ENCODE measurements at regions of chr4 and their contacts with region 1.

Region 1: DNA sequence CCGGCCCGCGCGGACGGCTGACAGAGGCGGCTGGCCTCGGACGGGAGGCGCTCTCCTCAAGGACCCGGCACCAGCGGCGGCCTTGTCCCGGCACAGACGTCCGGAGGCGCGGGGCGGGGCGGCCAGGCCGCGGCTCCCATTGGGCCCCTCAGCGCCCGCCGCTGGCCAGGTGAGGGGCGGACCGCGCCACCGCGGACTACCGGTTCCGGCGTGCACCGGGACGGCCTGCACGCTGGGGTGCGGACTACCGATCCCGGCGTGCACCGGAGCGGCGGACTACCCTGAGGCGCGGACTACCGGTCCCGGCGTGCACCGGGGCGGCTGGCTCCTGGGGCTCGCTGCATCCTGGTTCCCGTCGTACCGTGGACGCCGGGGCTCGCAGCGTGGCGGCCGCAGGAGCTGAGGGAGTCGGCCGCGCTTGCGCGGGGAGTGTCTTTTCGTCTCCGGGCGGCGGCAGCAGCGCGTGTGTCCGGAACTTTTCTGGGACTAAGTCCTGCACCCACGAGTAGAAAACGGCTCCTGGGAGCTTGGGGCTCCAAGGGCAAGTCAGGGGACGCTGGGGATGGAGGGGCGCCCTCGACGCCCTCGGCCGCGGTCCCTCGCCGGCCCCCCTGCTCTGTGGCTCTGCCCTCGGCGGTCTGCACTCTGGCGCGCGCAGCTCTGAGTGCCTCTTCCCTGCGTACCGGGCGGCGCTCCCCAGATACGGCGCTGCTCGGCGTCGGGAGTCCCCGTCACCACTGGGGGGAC is at the start of gene LETM1:
- DNase-seq: peak; percentile 93 to 95
- ATAC-seq: peak; percentile 82 to 89
- H3K4me3 ChIP-seq: peak within 1 kb of the TSS; percentile 63 to 98 (median 78)
- H3K27ac ChIP-seq: peak within 1 kb of the TSS; percentile 72 to 94 (median 83)
- H3K4me1 ChIP-seq: peaks cover 32 to 43% of the 10 kb centered on the region in 2 donors
- H3K27me3 ChIP-seq: no peaks in the 10 kb centered on the region
- CTCF ChIP-seq: peak in 3 of 5 experiments; percentile 4 to 32 (median 10)
- POLR2A ChIP-seq: peak; percentile 70 to 78
- total RNA-seq, gene LETM1: 23.2 to 40.3 (median 33.6) TPM

Region 2: GRCh38 chr4:1249148-1249730 is 607.0 kb before region 1 on chr4:
- in situ Hi-C with region 1: no loop called
- intact Hi-C with region 1: loop called (anchors 5 kb)
- DNase-seq: peak; percentile 74 to 78
- ATAC-seq: peak; percentile 78 to 80
- H3K4me3 ChIP-seq: peak overlapping the region; percentile 68 to 85 (median 83)
- H3K27ac ChIP-seq: peak overlapping the region; percentile 94 to 97 (median 96)
- H3K4me1 ChIP-seq: peaks cover 45 to 73% of the 10 kb centered on the region in 2 donors
- H3K27me3 ChIP-seq: no peaks in the 10 kb centered on the region
- CTCF ChIP-seq: no peak
- POLR2A ChIP-seq: peak; percentile 23 to 62

Region 3: GRCh38 chr4:1683736-1684505 is 172.3 kb before region 1 on chr4 and contains the start of gene FAM53A:
- in situ Hi-C with region 1: loop called in 1 of 4 experiments (anchors 5 kb)
- intact Hi-C with region 1: no loop called
- DNase-seq: peak in 1 of 2 donors; percentile 79
- ATAC-seq: peak; percentile 85 to 86
- H3K4me3 ChIP-seq: peak within 1 kb of the TSS; percentile 62 to 85 (median 71)
- H3K27ac ChIP-seq: peak within 1 kb of the TSS; percentile 68 to 86 (median 80)
- H3K4me1 ChIP-seq: peaks cover 0 to 11% of the 10 kb centered on the region in 2 donors
- H3K27me3 ChIP-seq: no peaks in the 10 kb centered on the region
- CTCF ChIP-seq: peak in 4 of 5 experiments; percentile 17 to 39 (median 26)
- POLR2A ChIP-seq: peak; percentile 64 to 68
- total RNA-seq, gene FAM53A: 1.8 to 5.2 (median 2.8) TPM

Region 4: DNA sequence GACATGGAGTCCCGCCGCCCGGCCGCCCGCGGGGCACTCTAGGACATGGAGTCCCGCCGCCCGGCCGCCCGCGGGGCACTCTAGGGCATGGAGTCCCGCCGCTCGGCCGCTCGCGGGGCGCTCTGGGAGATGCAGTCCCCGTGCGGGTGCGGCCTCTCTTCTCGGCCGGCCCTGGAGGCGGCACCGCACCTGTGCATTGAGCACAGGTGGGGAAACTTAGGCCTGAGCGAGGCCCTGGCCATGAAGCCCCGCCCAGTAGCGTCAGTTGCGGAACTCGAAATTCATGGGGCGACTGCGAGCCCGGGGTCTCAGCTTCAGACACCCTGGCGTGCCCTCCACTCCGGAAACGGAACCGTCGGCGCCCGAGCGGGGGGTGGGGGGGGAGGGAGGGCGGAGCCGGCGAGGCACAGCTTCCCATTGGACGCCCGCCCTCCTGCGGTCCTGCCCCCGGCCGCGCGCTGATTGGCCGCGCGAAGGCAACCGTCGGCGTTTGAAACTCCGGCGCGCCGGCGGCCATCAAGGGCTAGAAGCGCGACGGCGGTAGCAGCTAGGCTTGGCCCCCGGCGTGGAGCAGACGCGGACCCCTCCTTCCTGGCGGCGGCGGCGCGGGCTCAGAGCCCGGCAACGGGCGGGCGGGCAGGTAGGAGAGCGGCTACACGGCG is 135.1 kb before region 1 on chr4 and contains the starts of genes TACC3 and TMEM129:
- in situ Hi-C with region 1: no loop called
- intact Hi-C with region 1: loop called (anchors 1 kb)
- DNase-seq: peak; percentile 93 to 96
- ATAC-seq: peak; percentile 94 to 96
- H3K4me3 ChIP-seq: peak within 1 kb of the TSS; percentile 79 to 95 (median 83)
- H3K27ac ChIP-seq: peak within 1 kb of the TSS; percentile 94 to 98 (median 97)
- H3K4me1 ChIP-seq: peaks cover 24 to 27% of the 10 kb centered on the region in 2 donors
- H3K27me3 ChIP-seq: no peaks in the 10 kb centered on the region
- CTCF ChIP-seq: no peak
- POLR2A ChIP-seq: peak; percentile 74 to 80
- total RNA-seq, gene TACC3: 1.5 to 3.2 (median 1.9) TPM
- total RNA-seq, gene TMEM129: 30.3 to 78.0 (median 44.2) TPM

Region 5: GRCh38 chr4:1870578-1871443 is 14.6 kb after region 1 on chr4 and contains the start of gene NSD2:
- in situ Hi-C with region 1: no loop called
- intact Hi-C with region 1: loop called (anchors 1 kb)
- DNase-seq: peak; percentile 78 to 79
- ATAC-seq: peak; percentile 84
- H3K4me3 ChIP-seq: peak within 1 kb of the TSS; percentile 68 to 91 (median 84)
- H3K27ac ChIP-seq: peak within 1 kb of the TSS; percentile 87 to 96 (median 91)
- H3K4me1 ChIP-seq: peaks cover 16 to 23% of the 10 kb centered on the region in 2 donors
- H3K27me3 ChIP-seq: peaks cover 2 to 9% (median 6%) of the 10 kb centered on the region in 3 donors
- CTCF ChIP-seq: peak in 1 of 5 experiments; percentile 12
- POLR2A ChIP-seq: peak; percentile 69 to 73
- total RNA-seq, gene NSD2: 14.8 to 21.3 (median 16.8) TPM

Region 6: DNA sequence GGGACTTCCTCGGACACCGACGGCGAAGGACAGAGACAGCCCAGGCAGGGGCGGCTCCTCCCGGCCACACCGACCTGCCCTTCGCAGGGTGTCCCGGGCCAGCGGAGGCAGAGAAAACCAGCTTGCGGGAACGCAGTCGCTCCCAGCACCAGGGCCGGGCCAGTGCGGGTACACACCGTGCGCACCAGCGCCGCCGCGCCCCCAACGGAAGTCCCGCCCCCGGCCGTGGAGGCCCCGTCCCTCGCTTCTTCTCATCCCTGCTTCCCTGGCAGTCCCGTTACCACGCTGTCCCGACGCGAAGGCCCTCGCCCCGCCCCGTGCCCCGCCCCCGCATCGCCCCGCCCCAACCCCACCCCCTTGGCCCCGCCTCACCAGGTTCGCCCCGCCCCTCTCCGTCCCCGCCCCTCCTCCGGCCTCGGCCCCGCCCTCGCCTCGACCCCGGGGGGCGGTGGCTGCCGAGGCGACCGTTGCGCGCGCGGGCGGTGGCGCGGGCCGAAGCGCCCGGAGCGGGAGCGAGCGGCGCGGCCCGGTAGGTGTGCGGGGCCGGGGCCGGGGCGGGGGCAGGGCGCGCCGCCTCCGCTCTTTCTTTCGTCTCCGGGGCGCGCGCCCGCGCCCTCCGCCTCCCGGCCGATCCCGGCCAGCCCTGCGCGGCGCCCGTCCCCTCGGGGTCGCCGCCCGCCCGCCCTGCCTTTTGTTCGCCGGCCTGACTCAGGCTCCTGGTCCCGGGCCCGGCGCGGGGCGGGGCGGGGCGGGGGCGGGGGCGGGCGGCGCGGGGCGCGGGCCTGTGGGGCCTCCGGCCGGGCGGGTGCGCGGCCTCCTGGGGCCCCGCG is 1436.6 kb after region 1 on chr4 and contains the start of gene RGS12:
- in situ Hi-C with region 1: no loop called
- intact Hi-C with region 1: loop called (anchors 10 kb)
- DNase-seq: peak; percentile 96 to 97
- ATAC-seq: peak; percentile 80 to 88
- H3K4me3 ChIP-seq: peak within 1 kb of the TSS; percentile 81 to 91 (median 84)
- H3K27ac ChIP-seq: peak within 1 kb of the TSS; percentile 99 to 100 (median 99)
- H3K4me1 ChIP-seq: peaks cover 17 to 22% of the 10 kb centered on the region in 2 donors
- H3K27me3 ChIP-seq: no peaks in the 10 kb centered on the region
- CTCF ChIP-seq: no peak
- POLR2A ChIP-seq: peak; percentile 98
- total RNA-seq, gene RGS12: 9.1 to 22.6 (median 21.1) TPM